HCT116 (cell line): ENCODE measurements at regions of chr6 and their contacts with region 1.

Region 1: GRCh38 chr6:116531675-116532570 is 13.6 kb downstream of the TRAPPC3L start:
- DNase-seq: peak; percentile 60
- ATAC-seq: peak; percentile 81
- H3K4me3 ChIP-seq: no peak overlapping the region
- H3K27ac ChIP-seq: no peak overlapping the region
- H3K4me1 ChIP-seq: peaks cover 3 to 17% of the 10 kb centered on the region in 2 experiments; a peak in 3 of 4 replicates
- H3K27me3 ChIP-seq: no peaks in the 10 kb centered on the region
- CTCF ChIP-seq: peak; percentile 66 to 86 (median 78)
- POLR2A ChIP-seq: no peak
- RAD21 ChIP-seq: peak; percentile 75

Region 2: GRCh38 chr6:116268589-116269293 is 263.2 kb before region 1 on chr6:
- CTCF ChIA-PET with region 1: interaction called, 19 read pairs
- POLR2A ChIA-PET with region 1: no interaction called
- RAD21 ChIA-PET with region 1: no interaction called
- intact Hi-C with region 1: loop called (anchors 5 kb)
- DNase-seq: peak; percentile 68
- ATAC-seq: peak; percentile 95
- H3K4me3 ChIP-seq: no peak overlapping the region
- H3K27ac ChIP-seq: no peak overlapping the region
- H3K4me1 ChIP-seq: peaks cover 0 to 10% of the 10 kb centered on the region in 2 experiments; a peak in 2 of 4 replicates
- H3K27me3 ChIP-seq: no peaks in the 10 kb centered on the region
- CTCF ChIP-seq: peak; percentile 84 to 99 (median 96)
- POLR2A ChIP-seq: no peak
- RAD21 ChIP-seq: peak; percentile 88

Region 3: DNA sequence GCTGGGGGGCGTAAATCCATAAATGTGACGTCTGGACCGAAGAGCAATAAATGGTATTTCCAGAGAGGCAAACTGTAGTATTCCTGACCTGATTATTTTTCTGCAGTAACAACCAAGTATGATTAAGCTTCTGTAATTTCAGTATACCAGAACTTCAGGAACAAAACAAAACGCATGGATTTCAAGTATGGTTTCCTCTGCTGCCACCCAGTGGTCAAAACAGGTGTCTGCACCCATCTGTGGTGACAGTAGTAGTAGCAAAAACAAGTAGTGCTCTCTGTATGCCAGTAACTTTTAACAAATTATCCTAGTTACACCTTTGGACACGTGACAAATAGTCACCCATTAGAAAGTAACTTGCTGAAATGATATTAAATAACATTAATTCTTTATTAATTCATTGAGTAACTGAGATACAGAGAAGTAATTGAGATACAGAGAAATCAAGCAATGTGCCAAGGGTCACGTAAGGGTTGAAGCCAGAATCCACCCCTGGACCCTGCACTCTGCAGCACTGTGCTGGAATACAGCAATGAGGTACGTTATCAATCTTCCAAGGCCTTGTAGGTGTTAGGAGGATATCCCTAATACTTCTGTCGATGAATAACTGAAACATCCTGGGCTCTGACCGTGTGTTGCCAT is 29.6 kb after region 1 on chr6:
- CTCF ChIA-PET with region 1: interaction called, 5 read pairs
- POLR2A ChIA-PET with region 1: no interaction called
- RAD21 ChIA-PET with region 1: no interaction called
- intact Hi-C with region 1: loop called (anchors 1 kb)
- DNase-seq: peak; percentile 55
- ATAC-seq: peak; percentile 80
- H3K4me3 ChIP-seq: no peak overlapping the region
- H3K27ac ChIP-seq: no peak overlapping the region
- H3K4me1 ChIP-seq: peaks cover 3 to 20% of the 10 kb centered on the region in 2 experiments; a peak in 3 of 4 replicates
- H3K27me3 ChIP-seq: no peaks in the 10 kb centered on the region
- CTCF ChIP-seq: peak; percentile 90 to 95 (median 91)
- POLR2A ChIP-seq: no peak
- RAD21 ChIP-seq: peak; percentile 87

Region 4: DNA sequence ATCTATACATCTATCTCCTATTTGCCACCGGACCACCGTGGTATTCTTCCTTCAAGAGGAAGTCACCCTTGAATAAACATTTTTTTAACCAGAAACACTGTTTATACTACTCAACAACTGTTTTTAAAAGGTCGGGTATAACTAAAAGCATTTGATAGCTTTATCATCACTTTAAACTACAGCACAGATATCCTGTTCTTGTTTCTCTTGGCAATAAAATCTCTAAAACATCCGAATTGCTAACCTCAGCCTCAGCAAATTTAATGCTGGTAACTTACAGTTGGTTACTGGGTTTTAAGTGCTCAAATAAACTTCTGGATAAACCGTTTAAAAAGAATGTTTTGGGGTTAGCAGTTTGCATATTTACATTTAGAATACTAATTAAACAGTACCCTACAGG is 116.2 kb after region 1 on chr6:
- CTCF ChIA-PET with region 1: no interaction called
- POLR2A ChIA-PET with region 1: no interaction called
- RAD21 ChIA-PET with region 1: no interaction called
- intact Hi-C with region 1: loop called (anchors 2 kb)
- DNase-seq: no peak
- ATAC-seq: no peak
- H3K4me3 ChIP-seq: no peak overlapping the region
- H3K27ac ChIP-seq: no peak overlapping the region
- H3K4me1 ChIP-seq: no peaks in the 10 kb centered on the region
- H3K27me3 ChIP-seq: no peaks in the 10 kb centered on the region
- CTCF ChIP-seq: no peak
- POLR2A ChIP-seq: no peak
- RAD21 ChIP-seq: no peak

Region 5: DNA sequence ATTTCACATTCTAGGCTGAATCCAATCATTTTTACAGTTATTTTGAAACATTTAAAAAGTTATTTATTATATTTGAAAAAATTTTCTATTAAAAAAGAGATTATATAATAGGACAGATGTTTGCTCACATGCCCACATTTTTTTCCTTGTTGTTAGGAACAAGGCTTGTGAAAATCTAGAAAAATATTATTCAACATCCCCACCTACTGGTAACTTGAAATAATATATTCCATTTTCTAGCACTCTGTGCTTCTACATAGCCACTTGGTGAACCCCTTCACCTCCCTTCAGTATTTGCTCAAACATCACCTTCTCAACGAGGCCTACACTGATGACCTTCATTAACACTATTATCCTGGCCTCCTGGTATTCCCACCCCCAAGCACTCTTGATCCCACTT is 315.3 kb after region 1 on chr6:
- CTCF ChIA-PET with region 1: no interaction called
- POLR2A ChIA-PET with region 1: no interaction called
- RAD21 ChIA-PET with region 1: no interaction called
- intact Hi-C with region 1: loop called (anchors 2 kb)
- DNase-seq: peak; percentile 35
- ATAC-seq: peak; percentile 80
- H3K4me3 ChIP-seq: no peak overlapping the region
- H3K27ac ChIP-seq: no peak overlapping the region
- H3K4me1 ChIP-seq: no peaks in the 10 kb centered on the region
- H3K27me3 ChIP-seq: no peaks in the 10 kb centered on the region
- CTCF ChIP-seq: peak; percentile 12 to 51 (median 30); a peak in 4 of 6 replicates
- POLR2A ChIP-seq: no peak
- RAD21 ChIP-seq: peak; percentile 60